GM12878 (cell line): ENCODE measurements at regions of chr16 and their contacts with region 1.

Region 1: GRCh38 chr16:3003582-3004302 is 9.0 kb upstream of the CLDN9 start:
- DNase-seq: peak; percentile 97
- ATAC-seq: peak; percentile 100
- H3K4me3 ChIP-seq: no peak overlapping the region
- H3K27ac ChIP-seq: no peak overlapping the region
- H3K4me1 ChIP-seq: peaks cover 17% of the 10 kb centered on the region
- H3K27me3 ChIP-seq: peaks cover 0 to 7% of the 10 kb centered on the region in 2 experiments; a peak in 3 of 4 replicates
- CTCF ChIP-seq: peak; percentile 56 to 75 (median 64)
- EP300 ChIP-seq: no peak
- POLR2A ChIP-seq: no peak
- RAD21 ChIP-seq: peak; percentile 71

Region 2: DNA sequence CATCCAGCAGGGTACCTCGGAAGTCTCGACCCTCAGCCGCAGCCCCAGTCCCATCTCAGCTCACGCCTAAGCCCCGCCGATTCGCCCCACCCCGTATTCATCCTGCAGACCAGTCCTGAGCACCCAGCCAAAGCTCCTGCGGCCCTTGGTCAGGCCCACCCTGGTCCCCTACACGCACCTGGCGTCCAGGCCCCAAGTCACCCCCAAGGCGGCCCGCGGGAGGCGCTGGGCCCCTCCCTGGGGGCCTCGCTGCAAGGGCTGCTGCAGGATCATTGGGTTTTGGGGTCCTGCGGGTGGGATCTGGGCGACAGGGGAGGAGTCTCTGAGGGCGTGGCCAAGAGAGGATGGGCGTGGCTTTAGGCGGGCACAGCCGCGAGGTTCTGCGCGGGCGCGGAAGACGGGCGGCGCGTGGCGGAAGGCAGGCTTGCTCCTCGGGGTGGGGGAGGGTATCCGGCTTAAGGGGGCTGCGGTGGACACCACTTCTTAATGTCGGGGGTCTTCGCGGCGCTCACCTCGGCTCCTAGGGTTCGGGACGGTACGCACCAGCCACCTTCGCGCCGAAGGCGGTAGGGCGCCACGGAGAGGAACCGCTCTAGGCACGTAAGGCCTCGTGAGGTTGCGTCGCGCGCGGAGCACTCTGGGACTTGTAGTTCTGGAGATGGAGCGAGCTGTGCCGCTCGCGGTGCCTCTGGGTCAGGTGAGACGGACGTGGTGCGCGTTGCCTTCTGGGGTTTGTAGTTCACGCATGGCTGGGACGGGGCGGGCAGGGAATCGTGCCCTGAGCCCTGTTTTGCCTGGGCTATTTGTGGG is 20.1 kb after region 1 on chr16 and contains the starts of genes HCFC1R1 and THOC6:
- CTCF ChIA-PET with region 1: interaction called, 421 read pairs
- POLR2A ChIA-PET with region 1: interaction called, 7 read pairs
- RAD21 ChIA-PET with region 1: interaction called, 94 read pairs
- SMC1A ChIA-PET with region 1: interaction called, 91 read pairs
- in situ Hi-C with region 1: no loop called
- intact Hi-C with region 1: loop called (anchors 1 kb)
- DNase-seq: peak; percentile 94
- ATAC-seq: peak; percentile 85
- H3K4me3 ChIP-seq: peak within 1 kb of the TSS; percentile 87
- H3K27ac ChIP-seq: peak within 1 kb of the TSS; percentile 86
- H3K4me1 ChIP-seq: peaks cover 25% of the 10 kb centered on the region
- H3K27me3 ChIP-seq: no peaks in the 10 kb centered on the region; a peak in 1 of 4 replicates
- CTCF ChIP-seq: no peak
- EP300 ChIP-seq: no peak
- POLR2A ChIP-seq: peak; percentile 95
- RAD21 ChIP-seq: no peak
- polyA plus RNA-seq, gene HCFC1R1: 2.8 to 10.2 TPM
- polyA plus RNA-seq, gene THOC6: 1.0 to 2.4 TPM